Psoas muscle (tissue), 8 donors: ENCODE measurements at regions of chr10 and their contacts with region 1.

Region 1: GRCh38 chr10:23994479-23995046 is 214.4 kb upstream of the KIAA1217 start:
- DNase-seq: peak; percentile 33 to 67
- ATAC-seq: peak; percentile 83 to 95 (median 90)
- H3K4me3 ChIP-seq: no peak overlapping the region
- H3K27ac ChIP-seq: no peak overlapping the region
- H3K4me1 ChIP-seq: peaks cover 6% of the 10 kb centered on the region
- H3K27me3 ChIP-seq: no peaks in the 10 kb centered on the region
- CTCF ChIP-seq: peak; percentile 93

Region 2: GRCh38 chr10:23981520-23982309 is 12.8 kb before region 1 on chr10:
- intact Hi-C with region 1: no loop called
- DNase-seq: no peak
- ATAC-seq: no peak
- H3K4me3 ChIP-seq: no peak overlapping the region
- H3K27ac ChIP-seq: no peak overlapping the region
- H3K4me1 ChIP-seq: peaks cover 12% of the 10 kb centered on the region
- H3K27me3 ChIP-seq: no peaks in the 10 kb centered on the region
- CTCF ChIP-seq: no peak

Region 3: DNA sequence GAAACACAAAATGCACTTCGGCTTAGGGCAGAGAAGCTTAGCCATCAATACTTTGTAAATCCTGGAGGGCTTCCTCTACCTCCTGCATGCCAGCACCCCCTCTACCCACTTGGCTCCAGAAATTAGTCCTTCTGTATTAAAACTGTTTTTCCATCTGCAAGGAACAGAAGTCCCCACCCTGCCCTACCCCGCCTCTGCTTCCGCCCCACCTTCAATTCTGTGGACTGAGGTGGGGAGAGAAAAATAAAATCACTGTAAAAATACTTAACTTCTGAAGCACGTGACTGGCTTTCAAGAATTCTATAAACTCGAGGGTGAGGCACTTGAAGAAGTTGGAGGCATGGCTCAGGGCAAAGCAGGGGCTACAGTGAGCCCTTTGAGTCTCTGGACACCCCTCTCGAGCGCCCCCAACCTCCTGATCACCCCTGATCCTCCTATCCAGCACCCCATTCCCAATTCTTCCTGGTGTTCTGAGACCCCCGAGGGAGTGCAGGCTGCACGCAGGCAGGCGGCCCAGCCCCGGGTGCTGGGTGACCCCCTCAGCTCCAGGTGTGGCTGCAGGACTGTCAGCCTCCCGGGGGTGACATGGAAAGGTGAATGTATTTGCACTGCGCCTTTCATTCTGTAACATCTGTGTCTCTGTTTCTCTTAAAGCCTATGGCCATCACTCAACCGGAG is 207.1 kb after region 1 on chr10:
- intact Hi-C with region 1: loop called (anchors 1 to 2 kb)
- DNase-seq: no peak
- ATAC-seq: no peak
- H3K4me3 ChIP-seq: no peak overlapping the region
- H3K27ac ChIP-seq: no peak overlapping the region
- H3K4me1 ChIP-seq: peaks cover 25% of the 10 kb centered on the region
- H3K27me3 ChIP-seq: no peaks in the 10 kb centered on the region
- CTCF ChIP-seq: no peak